Heart left ventricle (tissue), 16 donors: ENCODE measurements at regions of chr2 and their contacts with region 1.

Region 1: DNA sequence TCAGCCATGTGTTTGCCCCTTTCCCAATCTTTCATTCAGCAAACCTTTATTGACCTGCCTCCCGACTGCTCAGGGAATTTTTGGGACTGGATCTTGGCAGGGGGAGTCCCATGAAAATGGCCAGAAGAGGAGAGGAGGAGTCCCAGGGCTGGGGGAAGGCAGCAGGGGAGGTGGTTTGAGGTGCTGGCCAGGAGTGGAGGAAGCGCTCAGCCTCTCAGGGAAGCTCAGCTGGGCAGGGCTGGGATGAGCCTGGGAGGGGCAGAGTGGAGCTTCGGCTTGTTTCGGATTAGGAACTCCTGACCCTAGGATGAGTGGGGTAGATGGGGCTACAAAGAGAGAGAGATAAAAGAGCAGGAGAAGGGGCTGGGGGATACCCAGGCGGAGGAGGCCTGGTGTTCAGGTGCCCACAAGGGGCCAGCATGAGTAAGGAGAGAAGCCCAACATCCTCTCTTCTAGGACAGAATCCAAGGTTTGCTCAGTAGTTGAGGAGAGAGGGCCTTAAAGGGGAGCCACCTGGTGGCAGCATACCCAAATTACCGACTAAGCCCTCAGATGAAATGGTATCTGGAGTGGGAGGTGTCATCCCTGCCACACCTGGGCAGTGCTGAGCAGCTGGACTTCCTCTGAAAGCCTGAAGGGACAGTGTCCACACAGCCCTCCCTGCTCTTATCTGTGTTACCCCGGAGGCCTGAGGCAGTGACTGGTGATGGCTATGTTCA is 91.1 kb downstream of the INHBB start:
- DNase-seq: no peak
- ATAC-seq: no peak
- H3K4me3 ChIP-seq: no peak overlapping the region
- H3K27ac ChIP-seq: no peak overlapping the region
- H3K4me1 ChIP-seq: peaks cover 0 to 4% (median 4%) of the 10 kb centered on the region in 12 donors
- H3K27me3 ChIP-seq: peaks cover 0 to 29% (median 9%) of the 10 kb centered on the region in 9 donors
- CTCF ChIP-seq: peak in 8 of 12 donors; percentile 6 to 35 (median 17)
- POLR2A ChIP-seq: no peak

Region 2: GRCh38 chr2:120352701-120353590 is 84.1 kb before region 1 on chr2:
- intact Hi-C with region 1: loop called in 1 of 10 experiments (anchors 5 kb)
- DNase-seq: peak in 2 of 5 donors; percentile 21 to 53
- ATAC-seq: peak in 1 of 4 donors; percentile 4
- H3K4me3 ChIP-seq: no peak overlapping the region
- H3K27ac ChIP-seq: no peak overlapping the region
- H3K4me1 ChIP-seq: peaks cover 0 to under 1% (median 0%) of the 10 kb centered on the region in 12 donors
- H3K27me3 ChIP-seq: peaks cover 0 to 23% (median 6%) of the 10 kb centered on the region in 9 donors
- CTCF ChIP-seq: no peak
- POLR2A ChIP-seq: no peak